B cell (primary cell): ENCODE measurements at regions of chr7 and their contacts with region 1.

Region 1: GRCh38 chr7:19713676-19714075 is 4.8 kb upstream of the POLR1F start:
- DNase-seq: peak; percentile 69
- ATAC-seq: no peak
- H3K4me3 ChIP-seq: no peak overlapping the region
- H3K4me3 Mint-ChIP-seq: no peak overlapping the region
- H3K27ac ChIP-seq: no peak overlapping the region
- H3K27ac Mint-ChIP-seq: no peak overlapping the region
- H3K4me1 ChIP-seq: peaks cover 6 to 7% of the 10 kb centered on the region in 2 donors
- H3K4me1 Mint-ChIP-seq: peaks cover 14% of the 10 kb centered on the region
- H3K27me3 ChIP-seq: no peaks in the 10 kb centered on the region
- H3K27me3 Mint-ChIP-seq: peaks cover 15% of the 10 kb centered on the region
- CTCF ChIP-seq: peak; percentile 79

Region 2: GRCh38 chr7:19701471-19701870 is 12.2 kb before region 1 on chr7:
- CTCF ChIA-PET with region 1: interaction called, 17 read pairs
- POLR2A ChIA-PET with region 1: no interaction called
- intact Hi-C with region 1: no loop called
- DNase-seq: no peak
- ATAC-seq: no peak
- H3K4me3 ChIP-seq: no peak overlapping the region
- H3K4me3 Mint-ChIP-seq: no peak overlapping the region
- H3K27ac ChIP-seq: no peak overlapping the region
- H3K27ac Mint-ChIP-seq: no peak overlapping the region
- H3K4me1 ChIP-seq: no peaks in the 10 kb centered on the region
- H3K4me1 Mint-ChIP-seq: peaks cover 6% of the 10 kb centered on the region
- H3K27me3 ChIP-seq: no peaks in the 10 kb centered on the region
- H3K27me3 Mint-ChIP-seq: no peaks in the 10 kb centered on the region
- CTCF ChIP-seq: no peak

Region 3: GRCh38 chr7:19725770-19726169 is 12.1 kb after region 1 on chr7:
- CTCF ChIA-PET with region 1: interaction called, 24 read pairs
- POLR2A ChIA-PET with region 1: no interaction called
- intact Hi-C with region 1: no loop called
- DNase-seq: no peak
- ATAC-seq: no peak
- H3K4me3 ChIP-seq: no peak overlapping the region
- H3K4me3 Mint-ChIP-seq: no peak overlapping the region
- H3K27ac ChIP-seq: no peak overlapping the region
- H3K27ac Mint-ChIP-seq: no peak overlapping the region
- H3K4me1 ChIP-seq: no peaks in the 10 kb centered on the region
- H3K4me1 Mint-ChIP-seq: no peaks in the 10 kb centered on the region
- H3K27me3 ChIP-seq: peaks cover 0 to 5% (median 0%) of the 10 kb centered on the region in 4 experiments
- H3K27me3 Mint-ChIP-seq: peaks cover 41% of the 10 kb centered on the region
- CTCF ChIP-seq: no peak

Region 4: DNA sequence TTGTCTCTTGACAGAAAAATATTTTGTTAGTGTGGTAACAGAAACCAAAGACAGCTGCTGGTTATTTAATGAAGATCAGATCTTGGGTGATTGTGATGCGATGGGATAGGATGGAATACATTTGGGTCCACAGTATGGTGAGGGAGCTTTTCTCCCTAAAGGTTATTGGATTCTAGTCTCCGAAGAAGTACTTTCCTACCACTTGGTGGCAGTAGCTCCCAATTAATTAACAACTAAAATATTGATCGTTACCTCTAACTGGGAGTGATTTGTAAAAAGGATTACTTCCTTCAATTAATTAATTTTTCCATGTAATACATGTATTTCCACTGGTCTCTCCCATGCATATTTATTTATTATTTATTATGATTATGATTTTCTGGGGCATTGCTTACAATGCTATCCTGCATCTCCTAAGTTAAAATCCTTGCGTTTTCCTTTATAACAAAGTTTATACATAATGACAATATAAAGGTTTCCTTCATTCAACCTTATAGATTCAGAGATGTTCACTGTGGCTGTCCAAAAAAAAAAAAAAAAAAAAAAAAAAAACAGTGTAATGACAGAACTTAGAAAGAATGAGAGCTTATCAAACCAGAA is 34.2 kb after region 1 on chr7:
- CTCF ChIA-PET with region 1: interaction called, 18 read pairs
- POLR2A ChIA-PET with region 1: no interaction called
- intact Hi-C with region 1: no loop called
- DNase-seq: peak; percentile 43
- ATAC-seq: no peak
- H3K4me3 ChIP-seq: no peak overlapping the region
- H3K4me3 Mint-ChIP-seq: no peak overlapping the region
- H3K27ac ChIP-seq: no peak overlapping the region
- H3K27ac Mint-ChIP-seq: no peak overlapping the region
- H3K4me1 ChIP-seq: no peaks in the 10 kb centered on the region
- H3K4me1 Mint-ChIP-seq: no peaks in the 10 kb centered on the region
- H3K27me3 ChIP-seq: no peaks in the 10 kb centered on the region
- H3K27me3 Mint-ChIP-seq: peaks cover 4% of the 10 kb centered on the region
- CTCF ChIP-seq: peak; percentile 76

Region 5: DNA sequence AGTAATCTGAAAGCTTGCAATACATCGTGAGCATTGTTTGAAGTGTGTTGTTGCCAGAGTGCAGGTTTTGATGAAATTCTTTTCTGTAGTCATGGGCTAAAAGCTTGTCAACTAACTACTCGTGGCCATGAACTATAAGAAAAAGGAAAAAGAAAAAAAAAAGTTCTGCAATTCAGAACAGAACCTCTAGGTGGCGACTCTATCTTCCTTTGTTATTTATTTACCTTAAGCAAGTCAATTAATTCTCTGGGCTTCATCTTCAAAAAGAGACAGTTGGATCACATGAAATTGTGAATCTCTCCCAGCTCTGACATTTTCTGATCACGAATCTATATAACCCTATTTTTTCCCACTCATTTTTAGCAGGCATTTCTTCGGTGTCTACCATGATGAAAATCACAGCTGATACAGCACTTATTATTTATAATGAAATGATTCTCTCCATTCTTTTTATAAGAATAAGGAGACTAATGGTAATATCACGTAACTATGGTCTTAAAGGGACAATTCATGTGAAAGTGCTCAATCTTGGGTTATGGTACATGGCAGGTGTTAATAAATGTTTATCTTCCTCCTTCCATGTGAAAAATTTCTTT is 40.9 kb after region 1 on chr7:
- CTCF ChIA-PET with region 1: interaction called, 16 read pairs
- POLR2A ChIA-PET with region 1: no interaction called
- intact Hi-C with region 1: no loop called
- DNase-seq: peak; percentile 58
- ATAC-seq: no peak
- H3K4me3 ChIP-seq: no peak overlapping the region
- H3K4me3 Mint-ChIP-seq: no peak overlapping the region
- H3K27ac ChIP-seq: no peak overlapping the region
- H3K27ac Mint-ChIP-seq: no peak overlapping the region
- H3K4me1 ChIP-seq: no peaks in the 10 kb centered on the region
- H3K4me1 Mint-ChIP-seq: no peaks in the 10 kb centered on the region
- H3K27me3 ChIP-seq: no peaks in the 10 kb centered on the region
- H3K27me3 Mint-ChIP-seq: peaks cover 6% of the 10 kb centered on the region
- CTCF ChIP-seq: peak; percentile 94

Region 6: GRCh38 chr7:19916046-19916445 is 202.4 kb after region 1 on chr7:
- CTCF ChIA-PET with region 1: no interaction called
- POLR2A ChIA-PET with region 1: no interaction called
- intact Hi-C with region 1: no loop called
- DNase-seq: no peak
- ATAC-seq: no peak
- H3K4me3 ChIP-seq: no peak overlapping the region
- H3K4me3 Mint-ChIP-seq: no peak overlapping the region
- H3K27ac ChIP-seq: no peak overlapping the region
- H3K27ac Mint-ChIP-seq: no peak overlapping the region
- H3K4me1 ChIP-seq: no peaks in the 10 kb centered on the region
- H3K4me1 Mint-ChIP-seq: no peaks in the 10 kb centered on the region
- H3K27me3 ChIP-seq: no peaks in the 10 kb centered on the region
- H3K27me3 Mint-ChIP-seq: peaks cover 2% of the 10 kb centered on the region
- CTCF ChIP-seq: no peak